CD4-positive, alpha-beta T cell (primary cell): ENCODE measurements at regions of chr10 and their contacts with region 1.

Region 1: GRCh38 chr10:57008189-57008588 is 647.1 kb upstream of the ZWINT start:
- DNase-seq: no peak
- ATAC-seq: no peak
- H3K4me3 ChIP-seq: no peak overlapping the region
- H3K4me3 Mint-ChIP-seq: no peak overlapping the region
- H3K27ac ChIP-seq: no peak overlapping the region
- H3K27ac Mint-ChIP-seq: no peak overlapping the region
- H3K4me1 ChIP-seq: no peaks in the 10 kb centered on the region
- H3K4me1 Mint-ChIP-seq: no peaks in the 10 kb centered on the region
- H3K27me3 ChIP-seq: no peaks in the 10 kb centered on the region
- H3K27me3 Mint-ChIP-seq: no peaks in the 10 kb centered on the region
- CTCF ChIP-seq: no peak

Region 2: GRCh38 chr10:55019439-55019838 is 1988.8 kb before region 1 on chr10:
- CTCF ChIA-PET with region 1: no interaction called
- POLR2A ChIA-PET with region 1: no interaction called
- intact Hi-C with region 1: loop called in 1 of 2 experiments (anchors 10 kb)
- DNase-seq: no peak
- ATAC-seq: no peak
- H3K4me3 ChIP-seq: no peak overlapping the region
- H3K4me3 Mint-ChIP-seq: no peak overlapping the region
- H3K27ac ChIP-seq: no peak overlapping the region
- H3K27ac Mint-ChIP-seq: no peak overlapping the region
- H3K4me1 ChIP-seq: no peaks in the 10 kb centered on the region
- H3K4me1 Mint-ChIP-seq: no peaks in the 10 kb centered on the region
- H3K27me3 ChIP-seq: no peaks in the 10 kb centered on the region
- H3K27me3 Mint-ChIP-seq: no peaks in the 10 kb centered on the region
- CTCF ChIP-seq: no peak

Region 3: DNA sequence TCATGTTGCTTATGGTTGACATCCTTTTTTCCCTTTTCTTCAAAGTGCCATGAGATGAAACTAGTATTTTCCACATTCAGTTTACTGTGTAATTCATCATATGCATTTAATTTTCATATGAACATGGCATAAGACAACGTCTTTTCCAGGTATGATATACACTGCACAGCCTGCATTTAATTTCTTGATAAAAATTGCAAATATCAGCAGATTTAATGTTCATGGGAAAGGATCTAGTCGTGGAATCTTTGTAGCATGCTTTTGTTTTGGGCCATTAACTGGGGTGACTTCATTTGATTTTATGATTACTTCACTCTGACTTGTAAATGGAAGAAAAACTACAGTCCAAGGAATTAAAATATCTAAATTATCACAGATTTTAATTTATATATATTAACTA is 422.2 kb after region 1 on chr10:
- CTCF ChIA-PET with region 1: no interaction called
- POLR2A ChIA-PET with region 1: no interaction called
- intact Hi-C with region 1: no loop called
- DNase-seq: no peak
- ATAC-seq: no peak
- H3K4me3 ChIP-seq: no peak overlapping the region
- H3K4me3 Mint-ChIP-seq: no peak overlapping the region
- H3K27ac ChIP-seq: no peak overlapping the region
- H3K27ac Mint-ChIP-seq: no peak overlapping the region
- H3K4me1 ChIP-seq: no peaks in the 10 kb centered on the region
- H3K4me1 Mint-ChIP-seq: no peaks in the 10 kb centered on the region
- H3K27me3 ChIP-seq: no peaks in the 10 kb centered on the region
- H3K27me3 Mint-ChIP-seq: no peaks in the 10 kb centered on the region
- CTCF ChIP-seq: no peak